ENCODE measurements at regions of chr10 and their contacts with region 1.

Region 1: GRCh38 chr10:6416892-6417512 is 163.1 kb downstream of the PRKCQ start:
- DNase-seq: no peak
- H3K4me3 Mint-ChIP-seq: no peak overlapping the region
- H3K27ac Mint-ChIP-seq: no peak overlapping the region
- H3K4me1 Mint-ChIP-seq: no peaks in the 10 kb centered on the region
- H3K27me3 Mint-ChIP-seq: no peaks in the 10 kb centered on the region

Region 2: GRCh38 chr10:6328699-6329423 is 88.1 kb before region 1 on chr10:
- CTCF ChIA-PET with region 1: no interaction called
- intact Hi-C with region 1: no loop called
- DNase-seq: no peak
- H3K4me3 Mint-ChIP-seq: no peak overlapping the region
- H3K27ac Mint-ChIP-seq: no peak overlapping the region
- H3K4me1 Mint-ChIP-seq: no peaks in the 10 kb centered on the region
- H3K27me3 Mint-ChIP-seq: no peaks in the 10 kb centered on the region

Region 3: DNA sequence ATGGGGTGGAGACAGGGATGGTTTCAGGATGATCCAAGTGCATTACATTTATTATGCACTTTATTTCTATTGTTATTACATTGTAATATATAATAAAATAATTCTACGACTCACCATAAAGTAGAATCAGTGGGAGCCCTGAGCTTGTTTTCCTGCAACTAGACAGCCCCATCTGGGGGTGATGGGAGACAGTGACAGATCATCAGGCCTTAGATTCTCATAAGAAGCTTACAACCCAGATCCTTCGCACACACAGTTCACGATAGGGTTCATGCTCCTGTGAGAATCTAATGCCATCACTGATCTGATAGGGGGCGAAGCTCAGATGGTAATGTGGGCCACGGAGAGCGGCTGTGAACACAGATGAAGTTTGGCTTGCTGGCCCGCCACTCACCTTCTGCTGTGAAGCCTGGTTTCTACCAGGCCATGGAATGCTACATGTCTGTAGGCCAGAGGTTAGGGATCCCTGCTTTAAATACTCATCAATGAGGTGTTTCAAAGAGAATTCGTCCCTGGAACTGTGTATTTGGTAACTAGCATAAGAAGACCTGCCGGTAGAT is 184.3 kb after region 1 on chr10:
- CTCF ChIA-PET with region 1: no interaction called
- intact Hi-C with region 1: loop called (anchors 1 kb)
- DNase-seq: peak; percentile 66
- H3K4me3 Mint-ChIP-seq: peak overlapping the region; percentile 51
- H3K27ac Mint-ChIP-seq: peak overlapping the region; percentile 88
- H3K4me1 Mint-ChIP-seq: peaks cover 71% of the 10 kb centered on the region
- H3K27me3 Mint-ChIP-seq: no peaks in the 10 kb centered on the region

Region 4: DNA sequence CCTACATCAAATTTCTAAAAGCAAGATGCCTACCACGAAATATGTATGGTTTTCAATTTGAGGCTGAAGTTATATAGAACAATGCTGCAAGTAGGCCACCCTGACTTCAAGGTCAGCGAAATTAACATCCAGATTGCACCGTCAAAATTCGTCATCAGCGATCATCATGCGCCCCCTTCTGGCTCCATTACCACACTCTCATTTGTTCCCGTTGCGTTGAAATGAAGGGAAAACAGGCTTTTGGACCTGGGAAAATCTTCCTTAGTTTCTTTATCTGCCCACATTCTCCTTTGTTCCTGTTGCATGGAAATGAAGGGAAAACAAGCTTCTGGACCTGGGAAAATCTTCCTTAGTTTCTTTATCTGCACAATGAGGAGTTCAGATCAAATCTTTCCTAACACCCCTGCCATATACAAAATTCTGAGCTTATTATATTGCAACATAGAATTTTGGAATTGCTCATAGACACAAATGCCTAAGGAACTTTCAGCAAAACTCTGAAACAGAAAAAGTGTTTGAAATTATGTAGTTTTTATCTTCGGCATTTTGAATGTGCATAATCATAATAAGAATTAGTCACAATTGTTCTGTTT is 261.3 kb after region 1 on chr10:
- CTCF ChIA-PET with region 1: interaction called, 56 read pairs
- intact Hi-C with region 1: loop called (anchors 1 kb)
- DNase-seq: peak; percentile 79
- H3K4me3 Mint-ChIP-seq: no peak overlapping the region
- H3K27ac Mint-ChIP-seq: no peak overlapping the region
- H3K4me1 Mint-ChIP-seq: peaks cover 2% of the 10 kb centered on the region
- H3K27me3 Mint-ChIP-seq: no peaks in the 10 kb centered on the region